ENCODE measurements at regions of chr3 and their contacts with region 1.

Region 1: GRCh38 chr3:123652346-123652984 is 67.6 kb upstream of the HACD2 start:
- DNase-seq: peak; percentile 72 to 88 (median 87)
- ATAC-seq: peak; percentile 91
- H3K4me3 ChIP-seq: no peak overlapping the region
- H3K4me1 ChIP-seq: peaks cover 16% of the 10 kb centered on the region
- CTCF ChIP-seq: peak; percentile 61

Region 2: GRCh38 chr3:123700791-123701722 is 48.6 kb after region 1 on chr3:
- intact Hi-C with region 1: loop called in 1 of 2 experiments (anchors 10 kb)
- DNase-seq: peak in 1 of 3 donors; percentile 38
- ATAC-seq: peak; percentile 47
- H3K4me3 ChIP-seq: no peak overlapping the region
- H3K4me1 ChIP-seq: peaks cover 4% of the 10 kb centered on the region
- CTCF ChIP-seq: no peak

Measured in mucosa of descending colon (tissue), 3 donors.